Cardiac septum (tissue), 1 donor: ENCODE measurements at regions of chr19 and their contacts with region 1.

Region 1: DNA sequence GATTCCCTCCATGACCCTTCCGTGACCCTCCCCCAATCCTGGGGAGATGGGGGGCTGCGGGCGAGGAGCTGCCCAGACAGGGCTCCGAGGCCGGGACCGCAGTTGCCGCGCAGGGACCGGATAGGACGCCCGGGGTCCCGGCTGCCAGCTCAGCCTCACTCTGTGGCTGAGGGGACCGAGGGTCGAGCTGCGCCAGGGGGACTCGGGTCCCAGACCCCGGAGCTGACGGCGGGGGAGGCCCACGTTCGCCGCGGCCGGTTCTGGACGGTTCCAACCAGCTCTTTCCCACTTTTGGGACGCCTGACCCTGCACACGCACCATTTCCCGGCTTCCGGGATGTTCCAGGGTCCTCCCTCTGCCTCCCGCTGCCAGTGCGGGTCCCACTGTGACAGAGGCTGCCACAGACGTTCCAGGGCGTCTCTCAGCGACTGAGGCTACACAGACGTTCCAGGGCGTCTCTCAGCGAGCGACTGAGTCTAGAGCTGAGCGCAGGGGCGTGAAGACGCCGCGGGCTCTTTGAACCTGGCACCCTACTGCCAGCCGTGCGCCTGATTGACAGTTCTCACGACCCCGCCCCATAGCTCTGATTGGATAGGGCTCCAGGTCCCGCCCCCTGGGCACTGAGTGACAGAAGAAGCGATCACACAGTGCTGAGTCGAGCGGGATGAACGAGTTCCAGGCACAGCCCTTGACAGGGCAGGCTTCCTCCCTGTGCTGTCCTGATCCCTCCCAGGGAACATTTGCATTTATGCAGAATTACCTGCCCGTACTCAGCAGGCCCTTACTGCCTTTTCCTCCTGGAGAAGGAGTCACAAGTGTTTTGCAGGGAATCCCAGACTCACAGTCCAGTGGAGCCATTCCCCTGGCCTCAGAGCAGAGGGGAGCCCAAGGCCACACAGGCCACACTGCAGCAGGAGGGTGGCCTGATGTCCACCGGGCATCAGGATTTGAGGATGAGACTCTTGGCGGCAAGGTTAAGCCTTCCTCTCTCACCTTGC is at the start of gene ZNF563:
- DNase-seq: peak; percentile 98
- total RNA-seq, gene ZNF563: 3.7 TPM

Region 2: GRCh38 chr19:12194827-12195731 is 138.4 kb before region 1 on chr19:
- intact Hi-C with region 1: loop called (anchors 10 kb)
- DNase-seq: peak; percentile 93

Region 3: DNA sequence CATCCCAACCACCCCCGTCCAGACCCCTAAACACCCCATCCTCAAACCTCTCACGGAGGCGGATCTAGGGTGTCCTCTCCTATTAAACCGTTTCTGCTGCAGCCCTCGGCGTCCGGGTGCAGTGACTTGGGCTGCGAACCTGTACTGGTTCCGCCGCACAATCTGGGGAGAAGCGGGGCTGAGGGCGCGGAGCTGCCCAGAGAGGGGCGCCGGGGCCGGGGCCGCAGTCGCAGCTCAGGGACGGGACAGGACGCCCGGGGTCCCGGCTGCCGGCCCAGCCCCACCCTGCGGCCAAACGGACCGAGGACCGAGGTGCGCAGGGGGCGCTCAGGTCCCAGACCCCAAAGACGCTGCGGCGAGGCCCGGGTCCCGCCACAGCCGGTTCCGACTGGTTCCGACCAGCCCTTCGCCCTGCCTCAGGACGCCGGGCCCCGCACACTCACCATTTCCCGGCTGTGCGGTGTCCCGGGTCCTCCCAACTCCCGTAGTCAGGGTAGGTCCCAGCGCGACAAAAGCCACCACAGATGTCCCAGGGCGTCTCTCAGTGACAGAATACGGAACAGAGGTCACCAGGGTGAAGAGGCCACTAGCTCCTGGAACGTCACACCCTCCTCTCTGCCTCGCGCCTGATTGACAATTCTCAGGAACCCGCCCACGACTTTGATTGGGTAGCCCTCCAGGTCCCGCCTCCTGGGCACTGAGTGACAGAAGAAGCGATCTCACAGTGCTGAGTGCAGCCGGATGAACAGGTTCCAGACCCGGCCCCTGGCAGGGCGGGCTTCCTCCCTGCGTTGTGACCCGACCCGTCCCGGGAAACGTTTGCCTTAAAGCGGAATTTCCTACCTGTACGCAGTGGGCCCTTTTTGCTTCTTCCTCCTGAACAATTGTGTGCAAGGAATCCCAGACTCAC is 39.0 kb before region 1 on chr19 and contains the start of gene ZNF44:
- intact Hi-C with region 1: loop called (anchors 2 kb)
- DNase-seq: peak; percentile 99
- total RNA-seq, gene ZNF44: 10.8 TPM

Region 4: DNA sequence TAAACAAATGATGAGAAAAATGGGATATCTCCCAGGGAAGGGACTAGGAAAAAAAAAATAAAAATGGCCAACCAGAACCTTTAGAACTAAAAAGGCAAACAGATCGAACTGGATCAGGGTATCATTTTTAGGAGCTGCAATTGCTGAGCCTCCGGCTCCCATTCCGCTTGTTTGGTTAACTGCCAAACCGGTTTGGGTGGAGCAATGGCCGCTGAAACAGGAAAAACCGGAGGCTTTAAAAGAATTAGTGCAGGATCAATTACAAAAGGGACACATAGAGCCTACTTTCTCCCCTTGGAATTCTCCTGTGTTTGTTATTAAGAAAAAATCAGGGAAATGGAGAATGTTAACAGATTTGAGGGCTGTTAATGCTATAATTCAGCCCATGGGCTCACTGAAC is 120.0 kb after region 1 on chr19:
- intact Hi-C with region 1: no loop called
- DNase-seq: no peak